Posterior vena cava (tissue), 2 donors: ENCODE measurements at regions of chr1 and their contacts with region 1.

Region 1: GRCh38 chr1:9867408-9868243 is 42.4 kb downstream of the CTNNBIP1 start:
- DNase-seq: peak; percentile 95

Region 2: DNA sequence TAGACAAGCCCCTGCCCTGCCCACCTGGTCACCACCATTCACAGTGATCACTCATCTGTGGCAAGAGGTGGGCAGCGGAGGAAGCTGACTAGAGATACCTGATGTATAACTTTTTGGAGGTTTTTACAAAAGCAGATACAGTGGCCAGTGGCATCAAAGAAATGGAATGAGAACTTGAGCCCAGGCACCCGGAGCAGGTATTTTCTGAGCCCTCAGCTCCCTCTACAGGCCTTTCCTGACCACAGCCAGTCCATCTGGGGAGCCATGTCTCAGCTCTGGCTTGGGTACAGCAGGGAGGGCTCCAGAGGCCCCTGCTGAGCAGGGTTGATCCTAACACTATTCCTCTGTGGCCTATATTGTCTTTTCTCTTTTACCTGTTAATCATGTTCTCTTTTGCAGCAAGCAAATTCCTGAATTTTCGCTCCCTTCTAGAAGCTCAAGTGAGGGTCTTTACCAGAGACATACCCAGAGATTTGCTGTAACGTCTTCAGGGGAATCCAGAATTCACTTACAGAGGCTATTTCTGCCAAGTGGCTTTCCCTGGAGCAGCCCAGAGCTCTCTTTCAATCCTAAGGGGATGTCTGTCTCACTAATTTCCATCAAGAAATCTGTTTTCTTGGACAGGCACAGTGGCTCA is 766.0 kb before region 1 on chr1:
- intact Hi-C with region 1: no loop called
- DNase-seq: no peak

Region 3: GRCh38 chr1:9629445-9630201 is 238.0 kb before region 1 on chr1:
- intact Hi-C with region 1: loop called in 1 of 2 experiments (anchors 2 kb)
- DNase-seq: peak; percentile 89

Region 4: DNA sequence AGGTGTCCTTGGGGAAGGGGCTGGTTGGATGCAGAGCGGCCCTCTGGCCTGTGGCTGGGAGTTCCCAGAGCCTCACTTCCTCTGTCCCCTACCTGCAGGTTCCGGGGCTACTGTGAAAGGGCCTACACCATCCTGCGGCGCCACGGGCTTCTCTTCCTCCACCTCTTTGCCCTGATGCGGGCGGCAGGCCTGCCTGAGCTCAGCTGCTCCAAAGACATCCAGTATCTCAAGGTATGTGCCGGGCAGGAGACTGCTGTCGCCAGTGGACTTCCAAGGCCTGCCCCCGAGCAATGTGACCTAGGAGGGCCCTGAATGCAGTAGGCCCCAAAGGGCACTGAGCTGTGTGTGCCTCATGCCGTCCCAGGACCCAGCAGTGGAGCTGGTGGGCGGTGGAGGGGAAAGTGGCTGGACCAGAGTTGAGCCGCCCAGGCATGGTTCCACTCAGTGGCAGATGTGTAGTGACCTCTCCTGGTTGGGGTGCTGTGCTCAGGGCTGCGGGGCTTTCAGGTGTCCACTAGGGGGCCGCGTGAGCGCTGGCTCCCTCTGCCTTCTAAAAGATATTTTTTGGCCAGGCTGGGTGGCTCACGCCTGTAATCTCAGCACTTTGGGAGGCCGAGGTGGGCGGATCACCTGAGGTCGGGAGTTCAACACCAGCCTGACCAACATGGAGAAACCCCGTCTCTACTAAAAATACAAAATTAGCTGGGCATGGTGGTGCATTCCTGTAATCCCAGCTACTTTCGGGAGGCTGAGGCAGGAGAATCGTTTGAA is 142.7 kb before region 1 on chr1:
- intact Hi-C with region 1: loop called in 1 of 2 experiments (anchors 10 kb)
- DNase-seq: no peak

Region 5: GRCh38 chr1:9784508-9785133 is 83.0 kb before region 1 on chr1:
- intact Hi-C with region 1: loop called (anchors 5 to 10 kb)
- DNase-seq: no peak

Region 6: GRCh38 chr1:9890224-9890731 is 22.7 kb after region 1 on chr1:
- intact Hi-C with region 1: no loop called
- DNase-seq: no peak

Region 7: GRCh38 chr1:10007169-10007568 is 139.5 kb after region 1 on chr1:
- intact Hi-C with region 1: no loop called
- DNase-seq: no peak